Activated CD8-positive, alpha-beta T cell treated with anti-CD3 and anti-CD28 coated beads, Interleukin-2, amount 10 ng/mL, durations not matched to agents 7 days and 5 days (primary cell): ENCODE measurements at regions of chr6 and their contacts with region 1.

Region 1: DNA sequence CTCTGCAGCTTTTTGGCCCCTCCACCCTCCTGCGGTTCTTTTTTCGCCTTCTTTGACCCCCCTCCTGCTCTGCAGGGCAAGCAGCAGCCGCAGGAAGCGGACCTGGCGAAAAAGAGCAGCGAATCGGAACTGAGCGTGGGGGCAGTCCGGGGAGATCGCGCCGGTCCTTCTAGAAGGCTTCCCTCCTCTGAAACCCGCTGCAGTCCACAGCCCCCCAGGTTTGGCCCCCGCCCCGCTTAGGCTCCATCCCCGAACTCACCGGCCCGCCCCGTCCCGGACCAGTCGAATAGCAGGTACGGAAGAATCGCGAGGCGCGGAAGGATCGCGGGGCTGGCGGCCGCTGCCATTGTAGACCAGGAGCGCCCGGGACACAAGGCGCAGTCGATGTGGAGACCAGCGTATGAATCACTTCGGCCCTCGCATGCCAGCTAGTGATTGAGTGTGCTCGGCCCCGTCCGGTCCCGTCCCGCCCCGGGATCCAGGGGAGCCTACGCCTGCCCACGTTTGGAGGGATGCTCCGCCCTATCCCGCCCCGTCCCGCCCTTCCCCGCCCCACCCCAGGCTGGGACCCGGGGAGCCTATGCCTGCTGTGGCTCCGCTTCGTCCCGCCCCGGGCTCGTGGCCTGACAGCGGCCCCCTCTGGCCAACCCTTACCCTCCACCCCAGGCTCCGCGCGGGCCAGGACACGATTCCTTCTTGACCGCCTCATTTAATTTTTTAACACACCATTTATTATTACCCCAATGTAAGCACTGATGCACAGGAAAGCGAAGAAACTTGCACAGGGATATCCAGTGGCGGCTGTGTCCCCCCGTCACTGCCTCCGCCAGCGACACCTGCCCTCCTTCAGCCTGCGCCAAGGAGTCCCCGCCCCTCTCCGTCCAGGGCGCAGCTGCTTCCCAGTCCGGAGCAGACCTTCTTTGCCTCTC is at the start of gene ULBP3:
- DNase-seq: peak; percentile 81
- ATAC-seq: peak; percentile 92
- H3K4me3 Mint-ChIP-seq: peak within 1 kb of the TSS; percentile 70
- H3K27ac Mint-ChIP-seq: peak within 1 kb of the TSS; percentile 36
- H3K4me1 Mint-ChIP-seq: peaks cover 22% of the 10 kb centered on the region
- H3K27me3 Mint-ChIP-seq: peaks cover 18% of the 10 kb centered on the region
- total RNA-seq, gene ULBP3: 1.8 to 2.9 TPM

Region 2: GRCh38 chr6:150057501-150057951 is 11.5 kb before region 1 on chr6:
- CTCF ChIA-PET with region 1: interaction called, 20 read pairs
- POLR2A ChIA-PET with region 1: no interaction called
- DNase-seq: no peak
- ATAC-seq: no peak
- H3K4me3 Mint-ChIP-seq: no peak overlapping the region
- H3K27ac Mint-ChIP-seq: no peak overlapping the region
- H3K4me1 Mint-ChIP-seq: peaks cover 11% of the 10 kb centered on the region
- H3K27me3 Mint-ChIP-seq: peaks cover 38% of the 10 kb centered on the region

Region 3: DNA sequence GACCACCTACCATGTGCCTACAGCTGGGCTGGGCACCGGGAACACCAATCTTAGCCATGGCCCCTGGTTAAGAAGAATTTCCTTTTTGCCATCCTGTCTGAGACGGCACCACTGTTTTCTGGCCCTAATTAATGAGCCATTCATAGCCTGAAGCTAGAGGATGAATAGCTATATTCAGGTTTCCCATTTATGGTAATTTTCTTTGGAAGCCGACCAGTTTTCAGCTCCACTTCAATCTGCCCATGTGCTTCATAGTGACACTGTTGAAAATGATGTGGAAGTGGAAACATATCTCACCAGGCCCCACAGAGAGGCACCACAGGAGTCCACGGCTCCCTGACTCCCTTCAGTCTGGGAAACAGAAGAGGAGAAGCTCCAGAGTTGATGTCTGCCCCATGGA is 22.5 kb after region 1 on chr6:
- CTCF ChIA-PET with region 1: interaction called, 10 read pairs
- POLR2A ChIA-PET with region 1: no interaction called
- DNase-seq: no peak
- ATAC-seq: no peak
- H3K4me3 Mint-ChIP-seq: no peak overlapping the region
- H3K27ac Mint-ChIP-seq: no peak overlapping the region
- H3K4me1 Mint-ChIP-seq: peaks cover 2% of the 10 kb centered on the region
- H3K27me3 Mint-ChIP-seq: peaks cover 18% of the 10 kb centered on the region

Region 4: DNA sequence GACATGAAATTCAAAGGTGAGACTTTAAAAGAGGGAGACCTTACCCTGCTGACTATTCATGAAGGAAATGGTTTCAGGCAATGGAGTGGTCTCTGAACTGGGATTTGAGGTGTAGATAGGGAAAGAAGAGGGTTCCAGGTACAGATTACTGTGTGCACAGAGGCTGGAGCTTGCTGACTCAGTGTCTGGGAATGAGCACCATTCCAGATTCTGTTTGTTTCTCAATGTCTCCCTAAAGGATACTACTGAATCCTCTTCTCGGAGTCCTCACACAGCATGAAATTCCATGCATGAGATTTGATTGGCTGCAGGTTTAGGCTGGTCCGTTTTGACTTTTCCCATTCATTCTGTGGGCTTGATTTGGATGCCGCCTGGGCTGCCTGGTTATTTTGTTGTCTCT is 122.8 kb after region 1 on chr6:
- CTCF ChIA-PET with region 1: no interaction called
- POLR2A ChIA-PET with region 1: no interaction called
- DNase-seq: no peak
- ATAC-seq: no peak
- H3K4me3 Mint-ChIP-seq: no peak overlapping the region
- H3K27ac Mint-ChIP-seq: no peak overlapping the region
- H3K4me1 Mint-ChIP-seq: no peaks in the 10 kb centered on the region
- H3K27me3 Mint-ChIP-seq: peaks cover 12% of the 10 kb centered on the region